ENCODE measurements at regions of chr20 and their contacts with region 1.

Region 1: GRCh38 chr20:62409931-62410745 is 3.1 kb upstream of the CABLES2 start:
- DNase-seq: peak; percentile 87 to 94 (median 92)
- H3K4me3 ChIP-seq: no peak overlapping the region
- H3K27ac ChIP-seq: no peak overlapping the region
- H3K4me1 ChIP-seq: peaks cover 26 to 31% of the 10 kb centered on the region in 2 donors
- H3K27me3 ChIP-seq: no peaks in the 10 kb centered on the region
- CTCF ChIP-seq: peak in 5 of 6 experiments; percentile 21 to 41 (median 39)
- POLR2A ChIP-seq: no peak

Region 2: DNA sequence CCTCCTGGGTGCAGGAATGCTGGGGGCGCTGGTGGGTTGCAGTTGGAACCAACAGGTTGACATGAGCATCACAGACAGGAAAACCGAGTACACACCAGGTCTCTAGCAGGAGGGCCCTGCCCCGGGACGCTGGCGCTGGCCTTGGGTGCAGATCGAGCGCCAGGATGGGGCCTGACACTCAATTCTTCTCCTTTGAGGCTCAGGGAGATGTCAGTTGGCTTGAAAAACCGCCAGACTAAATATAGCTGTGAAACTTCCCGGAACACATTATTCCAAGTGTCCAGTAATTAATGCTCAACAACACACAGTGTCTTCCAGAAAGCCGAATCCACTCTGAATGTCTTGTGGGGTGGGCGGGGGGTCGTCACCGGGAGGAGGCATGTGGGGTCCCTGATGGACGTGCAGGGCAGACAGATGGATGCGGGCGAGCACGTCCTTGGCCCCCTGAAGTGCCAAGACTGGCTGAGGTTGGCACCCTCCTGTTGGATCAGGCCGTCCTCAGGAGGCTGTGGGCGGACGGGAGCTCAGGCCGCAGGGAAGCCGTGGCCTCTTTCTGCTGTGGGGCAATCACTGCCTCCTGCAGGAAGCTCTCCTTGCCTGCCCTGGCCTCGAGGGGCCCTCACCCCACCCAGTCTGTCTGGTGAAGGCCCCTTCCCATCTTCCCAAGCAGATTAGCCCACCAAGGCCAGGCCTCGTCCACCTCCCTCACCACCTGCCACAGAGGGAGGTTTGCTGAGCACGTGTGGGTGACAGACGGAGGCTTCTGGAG is 85.0 kb after region 1 on chr20:
- intact Hi-C with region 1: loop called in 1 of 2 experiments (anchors 5 kb)
- DNase-seq: peak in 3 of 7 donors; percentile 26 to 44 (median 42)
- H3K4me3 ChIP-seq: no peak overlapping the region
- H3K27ac ChIP-seq: peak overlapping the region in 4 of 5 donors; percentile 6 to 85 (median 46)
- H3K4me1 ChIP-seq: peaks cover 3 to 35% of the 10 kb centered on the region in 2 donors
- H3K27me3 ChIP-seq: no peaks in the 10 kb centered on the region
- CTCF ChIP-seq: no peak
- POLR2A ChIP-seq: no peak

Measured in adrenal gland (tissue), 19 donors.